BJ (cell line): ENCODE measurements at regions of chr3 and their contacts with region 1.

Region 1: DNA sequence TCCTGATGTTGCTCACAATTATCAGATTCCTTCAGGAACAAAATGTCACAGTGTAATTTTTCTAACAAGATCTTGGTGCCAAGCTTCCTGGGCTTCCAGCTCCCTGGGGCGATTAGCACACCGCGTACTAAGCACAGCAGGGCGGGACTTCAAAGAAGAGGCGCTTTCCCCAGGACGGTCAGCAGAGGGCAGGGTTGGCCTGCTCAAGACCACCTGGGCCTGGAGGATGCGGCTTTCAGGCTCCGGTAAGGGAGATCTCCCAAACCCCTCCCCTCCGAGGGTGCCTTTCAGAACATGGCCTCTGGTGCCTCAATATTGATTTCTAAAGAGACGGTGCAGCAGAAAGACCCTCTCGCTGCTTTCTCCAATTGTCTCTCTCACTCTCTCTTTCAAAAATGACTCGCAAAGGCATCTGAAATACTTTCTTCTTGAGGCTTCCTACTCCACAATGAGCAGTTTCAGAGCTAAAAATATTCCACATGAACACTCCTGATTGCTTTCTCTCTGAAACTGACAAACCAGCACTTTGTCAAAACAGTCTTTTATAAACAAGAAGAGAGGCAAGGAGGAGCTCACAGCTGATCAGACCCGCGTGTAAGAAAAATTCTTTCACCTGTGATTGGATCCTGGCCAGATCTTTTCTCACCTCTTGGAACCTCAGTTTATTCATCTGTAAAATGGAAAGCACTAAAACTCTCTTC is 154.0 kb downstream of the ADAMTS9 start:
- DNase-seq: peak; percentile 20
- H3K4me3 ChIP-seq: no peak overlapping the region
- H3K27me3 ChIP-seq: peaks cover 2% of the 10 kb centered on the region
- CTCF ChIP-seq: peak; percentile 92

Region 2: GRCh38 chr3:64501298-64501906 is 32.4 kb before region 1 on chr3:
- CTCF ChIA-PET with region 1: no interaction called
- POLR2A ChIA-PET with region 1: no interaction called
- DNase-seq: no peak
- H3K4me3 ChIP-seq: no peak overlapping the region
- H3K27me3 ChIP-seq: peaks cover 2% of the 10 kb centered on the region; the same call in 1 of the 2 replicates
- CTCF ChIP-seq: no peak

Region 3: GRCh38 chr3:64518950-64519349 is 14.8 kb before region 1 on chr3:
- CTCF ChIA-PET with region 1: interaction called, 39 read pairs
- POLR2A ChIA-PET with region 1: no interaction called
- DNase-seq: peak; percentile 55
- H3K4me3 ChIP-seq: no peak overlapping the region
- H3K27me3 ChIP-seq: no peaks in the 10 kb centered on the region
- CTCF ChIP-seq: no peak

Region 4: GRCh38 chr3:64575211-64575844 is 41.6 kb after region 1 on chr3:
- CTCF ChIA-PET with region 1: interaction called, 13 read pairs
- POLR2A ChIA-PET with region 1: no interaction called
- DNase-seq: no peak
- H3K4me3 ChIP-seq: no peak overlapping the region
- H3K27me3 ChIP-seq: no peaks in the 10 kb centered on the region
- CTCF ChIP-seq: peak; percentile 54

Region 5: GRCh38 chr3:64656945-64657344 is 123.2 kb after region 1 on chr3:
- CTCF ChIA-PET with region 1: no interaction called
- POLR2A ChIA-PET with region 1: no interaction called
- DNase-seq: no peak
- H3K4me3 ChIP-seq: no peak overlapping the region
- H3K27me3 ChIP-seq: no peaks in the 10 kb centered on the region
- CTCF ChIP-seq: no peak

Region 6: GRCh38 chr3:65170390-65171042 is 636.7 kb after region 1 on chr3:
- CTCF ChIA-PET with region 1: interaction called, 15 read pairs
- POLR2A ChIA-PET with region 1: no interaction called
- DNase-seq: peak; percentile 26
- H3K4me3 ChIP-seq: no peak overlapping the region
- H3K27me3 ChIP-seq: no peaks in the 10 kb centered on the region
- CTCF ChIP-seq: peak; percentile 42

Region 7: GRCh38 chr3:65751123-65751700 is 1217.4 kb after region 1 on chr3:
- CTCF ChIA-PET with region 1: interaction called, 13 read pairs
- POLR2A ChIA-PET with region 1: no interaction called
- DNase-seq: no peak
- H3K4me3 ChIP-seq: no peak overlapping the region
- H3K27me3 ChIP-seq: no peaks in the 10 kb centered on the region
- CTCF ChIP-seq: peak; percentile 75